ENCODE measurements at regions of chr5 and their contacts with region 1.

Region 1: GRCh38 chr5:65213921-65214525 is 267.7 kb downstream of the ADAMTS6 start:
- DNase-seq: no peak
- ATAC-seq: peak; percentile 50

Region 2: GRCh38 chr5:64958757-64959391 is 255.1 kb before region 1 on chr5:
- intact Hi-C with region 1: loop called (anchors 10 kb)
- DNase-seq: no peak
- ATAC-seq: no peak

Measured in Right ventricle myocardium inferior (tissue), 1 donor.